ENCODE measurements at regions of chr14 and their contacts with region 1.

Region 1: GRCh38 chr14:22986508-22987054 is 4.2 kb upstream of the AJUBA start:
- DNase-seq: peak; percentile 95
- ATAC-seq: peak; percentile 61
- H3K4me3 Mint-ChIP-seq: no peak overlapping the region
- H3K27ac Mint-ChIP-seq: no peak overlapping the region
- H3K4me1 Mint-ChIP-seq: no peaks in the 10 kb centered on the region
- H3K27me3 Mint-ChIP-seq: no peaks in the 10 kb centered on the region

Region 2: DNA sequence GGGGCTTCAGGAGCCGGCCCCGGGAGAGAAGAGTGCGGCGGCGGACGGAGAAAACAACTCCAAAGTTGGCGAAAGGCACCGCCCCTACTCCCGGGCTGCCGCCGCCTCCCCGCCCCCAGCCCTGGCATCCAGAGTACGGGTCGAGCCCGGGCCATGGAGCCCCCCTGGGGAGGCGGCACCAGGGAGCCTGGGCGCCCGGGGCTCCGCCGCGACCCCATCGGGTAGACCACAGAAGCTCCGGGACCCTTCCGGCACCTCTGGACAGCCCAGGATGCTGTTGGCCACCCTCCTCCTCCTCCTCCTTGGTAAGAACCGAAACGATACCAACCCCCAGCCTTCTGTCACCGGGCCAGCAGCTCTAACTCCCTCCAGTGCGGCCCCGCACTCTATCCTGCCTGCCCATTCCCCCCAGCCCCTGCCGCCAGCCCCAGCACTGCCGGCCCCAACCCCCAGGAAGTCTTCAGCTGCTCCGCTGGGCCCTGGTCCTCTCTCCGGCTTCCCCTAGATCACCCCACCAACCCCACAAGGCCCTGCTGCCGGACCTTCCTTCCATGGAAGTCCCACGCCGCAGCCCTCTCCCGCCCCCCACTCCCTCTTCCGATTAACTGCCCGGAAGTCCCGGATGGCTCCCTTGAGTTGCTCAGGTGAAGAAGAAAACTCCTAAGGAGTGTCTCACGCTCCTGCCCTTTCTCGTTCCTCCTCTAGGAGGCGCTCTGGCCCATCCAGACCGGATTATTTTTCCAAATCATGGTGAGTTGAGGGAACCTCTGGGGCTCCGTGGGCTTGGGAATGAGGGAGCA is 114.3 kb before region 1 on chr14:
- CTCF ChIA-PET with region 1: no interaction called
- POLR2A ChIA-PET with region 1: no interaction called
- intact Hi-C with region 1: loop called (anchors 2 to 5 kb)
- DNase-seq: peak; percentile 84
- ATAC-seq: peak; percentile 13
- H3K4me3 Mint-ChIP-seq: peak overlapping the region; percentile 88
- H3K27ac Mint-ChIP-seq: peak overlapping the region; percentile 91
- H3K4me1 Mint-ChIP-seq: peaks cover 37% of the 10 kb centered on the region
- H3K27me3 Mint-ChIP-seq: no peaks in the 10 kb centered on the region

Region 3: DNA sequence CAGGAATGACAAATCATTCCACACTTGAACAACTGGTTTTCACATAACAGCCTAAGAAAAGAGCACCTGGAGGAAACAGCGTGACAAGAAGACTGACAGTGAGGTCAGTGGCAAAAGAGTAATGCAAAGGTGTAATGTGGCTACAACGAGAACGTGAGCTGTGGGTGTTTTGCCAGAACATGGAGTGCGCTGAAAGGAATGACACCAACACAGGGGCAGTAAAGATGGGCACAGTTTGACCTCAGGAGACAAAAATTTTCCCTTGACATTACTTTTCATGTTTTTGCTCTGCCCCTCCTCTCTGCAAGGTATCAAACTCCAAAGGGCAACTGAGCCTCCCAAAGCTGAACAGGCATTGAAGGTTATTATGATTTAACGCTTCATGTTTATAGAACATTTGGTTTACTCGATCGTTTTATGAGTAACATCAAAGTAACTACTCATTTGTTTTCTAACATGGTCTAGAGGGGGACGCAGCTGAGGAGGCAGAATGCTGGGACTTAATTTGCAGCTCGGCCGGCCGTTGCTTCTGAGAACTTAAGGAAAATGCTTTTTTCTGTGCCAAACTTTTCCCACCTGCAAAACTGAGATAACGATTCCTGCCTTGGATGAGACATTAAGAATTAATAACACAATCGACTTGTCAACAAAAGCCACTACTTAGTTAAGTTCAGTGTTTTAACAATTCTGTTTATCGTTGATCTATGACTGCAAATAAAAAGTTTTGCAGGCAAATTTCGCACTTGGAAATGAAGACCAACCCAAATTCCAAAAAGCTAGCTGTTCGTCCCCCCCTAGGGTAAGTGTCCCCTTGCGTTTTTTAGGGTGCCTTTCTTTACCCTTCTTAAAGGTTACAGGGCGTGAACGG is 30.6 kb before region 1 on chr14:
- CTCF ChIA-PET with region 1: interaction called, 36 read pairs
- POLR2A ChIA-PET with region 1: no interaction called
- intact Hi-C with region 1: loop called in 1 of 2 experiments (anchors 1 kb)
- DNase-seq: no peak
- ATAC-seq: no peak
- H3K4me3 Mint-ChIP-seq: peak overlapping the region; percentile 88
- H3K27ac Mint-ChIP-seq: peak overlapping the region; percentile 90
- H3K4me1 Mint-ChIP-seq: peaks cover 18% of the 10 kb centered on the region
- H3K27me3 Mint-ChIP-seq: no peaks in the 10 kb centered on the region

Region 4: GRCh38 chr14:23006544-23007419 is 20.2 kb after region 1 on chr14:
- CTCF ChIA-PET with region 1: interaction called, 44 read pairs
- POLR2A ChIA-PET with region 1: interaction called, 4 read pairs
- intact Hi-C with region 1: no loop called
- DNase-seq: peak; percentile 98
- ATAC-seq: peak; percentile 98
- H3K4me3 Mint-ChIP-seq: peak overlapping the region; percentile 95
- H3K27ac Mint-ChIP-seq: peak overlapping the region; percentile 99
- H3K4me1 Mint-ChIP-seq: peaks cover 45% of the 10 kb centered on the region
- H3K27me3 Mint-ChIP-seq: no peaks in the 10 kb centered on the region

Region 5: GRCh38 chr14:23040100-23040499 is 53.5 kb after region 1 on chr14:
- CTCF ChIA-PET with region 1: interaction called, 18 read pairs
- POLR2A ChIA-PET with region 1: no interaction called
- intact Hi-C with region 1: loop called in 1 of 2 experiments (anchors 1 kb)
- DNase-seq: no peak
- ATAC-seq: no peak
- H3K4me3 Mint-ChIP-seq: no peak overlapping the region
- H3K27ac Mint-ChIP-seq: no peak overlapping the region
- H3K4me1 Mint-ChIP-seq: peaks cover 9% of the 10 kb centered on the region
- H3K27me3 Mint-ChIP-seq: no peaks in the 10 kb centered on the region

Region 6: DNA sequence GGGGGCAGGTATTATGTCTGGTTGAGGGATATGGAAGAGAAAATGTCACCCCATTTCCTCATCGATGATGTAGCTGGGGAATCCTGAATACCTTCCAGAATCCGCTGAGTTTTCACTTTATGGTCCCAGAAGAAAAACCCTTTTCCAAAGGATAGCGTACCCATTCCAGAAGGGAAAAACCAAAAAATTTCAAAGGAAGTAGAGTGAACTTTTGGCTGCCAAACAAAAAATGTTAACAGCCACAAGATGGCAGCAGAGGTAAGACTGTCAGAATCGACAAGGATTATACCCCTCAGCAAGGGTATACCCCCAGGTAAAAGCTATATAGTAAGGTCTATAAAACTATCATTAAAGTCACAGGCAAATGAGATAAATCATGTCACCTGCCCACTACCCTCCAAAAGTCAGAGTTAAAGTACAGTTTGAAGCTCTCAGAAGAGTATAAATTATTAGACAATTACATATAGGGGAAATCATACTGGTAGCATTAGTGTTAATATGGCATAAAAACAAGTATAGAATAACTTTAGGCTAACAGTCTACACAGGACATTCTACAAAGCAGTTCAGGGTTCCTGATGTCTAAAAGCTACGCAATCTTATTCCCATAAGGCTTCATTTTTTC is 90.3 kb after region 1 on chr14:
- CTCF ChIA-PET with region 1: interaction called, 25 read pairs
- POLR2A ChIA-PET with region 1: interaction called, 4 read pairs
- intact Hi-C with region 1: no loop called
- DNase-seq: peak; percentile 46
- ATAC-seq: peak; percentile 59
- H3K4me3 Mint-ChIP-seq: no peak overlapping the region
- H3K27ac Mint-ChIP-seq: peak overlapping the region; percentile 17
- H3K4me1 Mint-ChIP-seq: peaks cover 5% of the 10 kb centered on the region
- H3K27me3 Mint-ChIP-seq: no peaks in the 10 kb centered on the region

Measured in activated CD4-positive, alpha-beta T cell treated with anti-CD3 and anti-CD28 coated beads for 36 hours (primary cell).